Left cardiac atrium (tissue), 4 donors: ENCODE measurements at regions of chrX and their contacts with region 1.

Region 1: DNA sequence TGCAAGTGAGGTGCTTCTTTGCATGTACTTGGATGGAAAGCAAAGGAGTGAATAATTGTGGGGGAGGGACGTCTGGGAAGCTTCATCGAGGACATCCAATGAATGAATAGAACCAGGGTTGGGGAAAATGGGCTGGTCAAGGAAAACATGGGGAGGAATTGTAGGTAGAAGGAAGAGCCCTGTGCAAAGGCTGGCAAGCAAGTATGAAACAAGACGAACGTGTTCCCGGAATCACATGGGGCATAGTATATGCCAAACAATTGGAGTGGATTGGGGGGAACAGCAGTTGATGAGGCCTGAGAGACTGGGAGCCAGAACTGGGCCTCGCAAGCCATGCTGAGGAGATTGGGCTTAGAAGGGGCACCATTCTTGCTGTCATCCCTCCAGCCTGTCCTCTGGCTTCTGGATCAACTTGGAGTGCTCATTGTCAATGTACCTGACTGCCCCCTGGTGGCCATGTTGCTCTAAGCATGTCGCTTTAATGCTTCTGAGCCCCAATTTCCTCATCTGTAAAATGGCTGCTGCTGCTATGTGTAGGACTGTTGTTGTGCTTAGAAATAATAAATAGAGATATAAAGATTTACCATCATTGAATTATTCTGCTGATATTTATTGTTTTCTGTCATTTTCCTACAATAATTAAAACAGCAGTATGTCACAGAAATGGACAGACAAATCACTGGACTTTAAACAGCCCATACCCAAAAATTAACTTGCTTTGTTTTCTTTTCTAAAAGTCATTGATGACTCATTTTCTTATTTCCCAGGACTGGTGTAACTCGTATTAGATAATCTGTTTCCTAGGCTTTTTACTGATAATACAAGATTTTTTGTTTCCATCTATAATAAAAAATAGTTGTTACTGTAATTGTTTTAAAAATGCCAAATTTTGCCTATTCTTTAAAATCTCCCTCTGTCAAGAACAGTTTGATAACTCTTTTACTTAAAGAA is 66.4 kb downstream of the JADE3 start:
- DNase-seq: peak; percentile 78
- ATAC-seq: peak; percentile 27 to 64

Region 2: DNA sequence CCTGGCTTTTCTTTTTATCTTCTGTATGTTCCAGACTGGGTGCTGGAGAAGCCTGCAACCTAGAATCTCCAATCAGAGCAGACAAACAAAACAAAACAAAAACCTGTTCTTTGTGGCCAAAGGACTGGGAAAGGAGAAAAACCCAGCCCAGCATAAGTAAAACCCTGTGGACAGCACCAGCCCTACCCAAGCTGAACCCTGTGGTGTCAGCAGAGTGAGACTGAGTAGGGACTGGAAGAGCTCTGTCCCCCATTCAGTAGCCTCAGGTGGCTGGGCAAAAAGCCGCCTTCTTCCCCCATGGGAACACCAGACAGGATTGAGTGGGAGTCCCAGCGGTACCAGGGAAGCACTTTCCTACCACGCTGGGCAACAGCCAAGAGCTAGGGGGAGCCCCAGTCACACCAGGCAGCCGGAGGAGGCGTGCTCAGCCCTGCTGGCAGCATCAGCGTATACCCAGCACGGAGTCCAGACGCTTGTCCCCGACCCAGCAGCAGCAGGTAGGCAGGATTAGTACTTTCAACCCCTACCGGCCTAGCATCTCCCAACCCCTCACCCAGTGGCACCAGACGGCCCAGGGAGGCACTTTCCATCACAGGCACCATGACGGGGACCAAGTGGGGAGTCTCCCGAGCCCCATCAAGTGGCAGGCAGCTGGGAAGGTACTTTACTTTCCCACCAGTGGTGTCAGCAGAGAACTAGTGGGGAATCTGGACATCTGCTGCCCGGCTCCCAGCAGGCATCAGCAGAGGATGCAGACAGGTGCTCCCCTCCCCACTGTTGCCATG is 75.0 kb before region 1 on chrX:
- intact Hi-C with region 1: loop called in 1 of 2 experiments (anchors 5 kb)
- DNase-seq: peak; percentile 86
- ATAC-seq: peak; percentile 96 to 100

Region 3: GRCh38 chrX:46912098-46912602 is 66.5 kb before region 1 on chrX and contains the start of gene JADE3:
- intact Hi-C with region 1: loop called (anchors 5 to 10 kb)
- DNase-seq: peak; percentile 81
- ATAC-seq: peak; percentile 94 to 97
- total RNA-seq, gene JADE3: 5.3 TPM

Region 4: DNA sequence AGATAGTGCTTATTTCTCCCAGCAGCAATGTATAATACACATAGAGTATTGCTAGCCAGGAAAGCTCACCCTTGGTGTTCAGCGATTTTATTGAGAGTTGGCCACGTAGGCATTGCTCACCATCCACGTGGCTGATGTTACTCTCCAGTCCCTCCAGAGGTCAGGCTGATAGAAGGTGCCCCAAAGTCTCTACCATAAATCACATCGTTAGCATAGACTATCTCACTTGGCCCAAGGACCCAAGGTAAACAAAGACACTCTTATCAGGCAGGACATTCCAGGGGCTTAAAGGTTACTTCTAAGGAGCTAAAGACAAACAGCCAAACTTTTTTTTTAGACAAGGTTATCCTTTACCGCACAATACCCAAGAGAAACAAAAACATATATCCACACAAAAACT is 69.4 kb after region 1 on chrX:
- intact Hi-C with region 1: no loop called
- DNase-seq: no peak
- ATAC-seq: no peak